ENCODE measurements at regions of chr9 and their contacts with region 1.

Region 1: DNA sequence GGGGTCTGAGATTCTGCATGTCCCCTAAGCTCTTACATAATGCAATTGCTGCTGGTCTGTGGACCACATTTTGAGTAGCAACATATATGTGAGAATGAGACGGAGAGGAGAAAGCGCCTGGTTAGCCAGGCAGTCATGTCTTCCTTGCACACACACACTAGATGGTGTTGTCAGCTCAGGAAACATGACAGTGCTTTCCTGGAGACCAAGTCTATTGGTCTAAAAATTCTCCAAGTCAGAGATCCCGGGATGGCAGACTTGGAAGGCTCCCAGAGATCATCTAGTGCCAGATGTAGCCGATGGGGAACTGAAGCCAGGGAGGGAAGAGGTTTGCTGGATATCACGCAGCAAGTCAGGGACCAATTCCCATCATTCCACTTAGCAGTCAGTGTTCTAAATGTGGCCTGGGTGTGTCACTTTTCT is 53.4 kb downstream of the GALNT12 start:
- DNase-seq: peak; percentile 61 to 74 (median 67)
- ATAC-seq: peak; percentile 76
- H3K4me3 ChIP-seq: no peak overlapping the region
- H3K27ac ChIP-seq: no peak overlapping the region
- H3K4me1 ChIP-seq: peaks cover 19% of the 10 kb centered on the region
- H3K27me3 ChIP-seq: no peaks in the 10 kb centered on the region
- CTCF ChIP-seq: peak in 6 of 7 experiments; percentile 25 to 77 (median 67)
- POLR2A ChIP-seq: no peak

Region 2: DNA sequence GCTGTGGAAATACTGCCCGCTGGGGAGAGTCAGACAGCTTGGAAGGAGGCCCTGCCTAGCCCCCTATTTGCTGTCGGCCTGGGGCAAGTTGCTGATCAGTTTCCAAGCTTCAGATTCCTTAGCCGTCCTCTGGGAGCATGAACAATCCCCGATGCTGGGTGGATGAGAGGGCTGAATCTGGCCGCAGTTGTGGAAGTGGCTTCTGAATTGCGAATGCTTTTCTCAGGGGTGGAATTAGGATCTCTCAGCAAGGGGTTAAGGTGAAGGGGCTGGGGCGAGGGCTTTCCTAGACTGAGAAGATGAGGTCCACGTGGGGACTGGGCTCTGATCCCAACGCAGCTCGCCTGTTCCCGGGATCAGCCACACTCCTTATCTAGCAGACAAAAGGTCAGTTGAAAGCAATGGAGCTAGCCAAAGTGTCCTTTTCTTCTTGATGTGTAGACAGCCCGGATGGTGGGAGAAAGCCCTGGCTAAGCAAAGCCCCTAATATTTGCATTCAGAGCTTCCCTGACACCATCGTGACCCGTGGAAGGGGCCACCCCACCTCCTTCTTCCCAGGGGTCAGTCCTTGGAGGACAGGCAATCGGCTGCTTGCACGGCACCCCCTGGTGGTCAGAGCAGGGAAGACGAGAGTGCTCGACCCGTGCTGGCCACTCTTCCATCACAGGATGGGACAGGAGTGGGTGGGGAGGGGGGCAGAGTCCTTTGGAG is 137.7 kb after region 1 on chr9:
- intact Hi-C with region 1: loop called (anchors 5 kb)
- DNase-seq: peak; percentile 78 to 85 (median 81)
- ATAC-seq: peak; percentile 87
- H3K4me3 ChIP-seq: no peak overlapping the region
- H3K27ac ChIP-seq: peak overlapping the region in 2 of 4 donors; percentile 4 to 30
- H3K4me1 ChIP-seq: peaks cover 21% of the 10 kb centered on the region
- H3K27me3 ChIP-seq: no peaks in the 10 kb centered on the region
- CTCF ChIP-seq: peak; percentile 75 to 88 (median 83)
- POLR2A ChIP-seq: no peak

Measured in body of pancreas (tissue), 4 donors.